A549 (cell line): ENCODE measurements at regions of chr2 and their contacts with region 1.

Region 1: GRCh38 chr2:23404426-23404825 is 19.4 kb downstream of the KLHL29 start:
- DNase-seq: peak; percentile 28 to 80
- ATAC-seq: peak; percentile 85 to 93
- H3K4me3 ChIP-seq: no peak overlapping the region
- H3K27ac ChIP-seq: peak overlapping the region; percentile 54 to 61
- H3K4me1 ChIP-seq: peaks cover 21% of the 10 kb centered on the region
- CTCF ChIP-seq: peak; percentile 27; the same call in 2 of the 3 replicates
- EP300 ChIP-seq: no peak
- POLR2A ChIP-seq: no peak
- RAD21 ChIP-seq: peak; percentile 47 to 51

Region 2: DNA sequence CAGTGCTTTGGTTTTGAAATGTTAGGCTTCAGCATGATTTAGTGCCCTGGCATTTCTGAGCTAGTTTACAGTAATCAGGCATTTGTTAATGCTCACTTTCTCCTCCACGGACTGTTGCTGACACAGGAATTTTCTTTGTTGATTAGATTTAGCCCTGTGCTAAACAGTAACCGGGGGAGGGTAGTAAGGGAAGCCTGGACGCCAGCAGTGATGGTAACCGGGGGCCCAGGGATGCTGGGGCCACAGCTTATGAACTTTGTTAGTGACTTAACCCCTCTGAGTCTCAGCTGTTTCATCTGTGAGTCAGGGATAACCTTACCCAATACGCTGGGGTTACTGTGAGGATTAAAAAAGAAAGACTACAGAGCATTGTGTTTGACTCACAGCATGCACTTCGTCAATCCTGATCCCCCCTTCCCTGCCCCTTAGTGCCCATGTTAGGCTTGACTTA is 14.1 kb after region 1 on chr2:
- CTCF ChIA-PET with region 1: interaction called, 10 read pairs
- POLR2A ChIA-PET with region 1: no interaction called
- DNase-seq: no peak
- ATAC-seq: peak; percentile 9 to 30; a peak in 3 of 6 replicates
- H3K4me3 ChIP-seq: no peak overlapping the region
- H3K27ac ChIP-seq: 0 out of 6 replicates have a peak overlapping the region, but pooled peaks of 1 of the 2 experiments have one; percentile 2
- H3K4me1 ChIP-seq: 0 out of 3 replicates have a peak, but pooled peaks cover 7% of the 10 kb centered on the region
- CTCF ChIP-seq: no peak
- EP300 ChIP-seq: no peak
- POLR2A ChIP-seq: no peak
- RAD21 ChIP-seq: no peak

Region 3: DNA sequence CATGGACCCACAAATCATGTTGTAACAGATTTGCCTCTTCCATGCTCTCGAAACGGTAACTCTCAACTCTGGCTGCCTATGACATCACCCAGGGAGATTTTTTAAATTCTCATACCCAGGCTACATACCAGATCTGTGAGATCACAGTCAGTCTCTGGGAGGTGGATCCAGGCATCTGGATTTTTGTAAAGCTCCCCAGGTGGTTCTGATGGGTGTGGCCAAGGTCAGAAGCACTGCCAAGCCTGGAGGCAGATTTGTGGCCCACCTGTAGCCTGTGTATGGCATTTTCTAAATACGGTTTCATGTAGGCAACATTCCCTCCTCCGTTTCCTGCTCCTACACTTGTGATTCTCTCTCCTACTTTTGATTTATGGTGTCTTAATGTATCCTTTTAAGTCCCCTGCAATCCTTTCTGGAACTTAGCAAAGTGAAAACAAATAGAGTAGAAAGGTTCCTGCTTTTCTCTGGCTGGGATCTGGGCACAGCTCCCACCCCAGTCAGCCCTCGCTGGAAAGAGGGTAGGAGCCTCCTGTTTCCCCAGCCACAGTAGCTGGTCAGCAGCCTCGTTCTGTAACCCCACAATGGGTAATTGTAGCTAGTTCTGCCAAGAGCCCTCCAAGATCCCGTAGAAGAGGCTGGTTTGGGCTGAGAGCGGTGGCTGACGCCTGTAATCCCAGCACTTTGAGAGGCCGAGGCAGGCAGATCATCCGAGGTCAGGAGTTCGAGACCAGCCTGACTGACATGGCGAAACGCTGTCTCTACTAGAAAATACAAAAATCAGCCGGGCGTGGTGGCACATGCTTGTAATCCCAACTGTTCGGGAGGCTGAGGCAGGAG is 76.8 kb after region 1 on chr2:
- CTCF ChIA-PET with region 1: no interaction called
- POLR2A ChIA-PET with region 1: no interaction called
- DNase-seq: peak; percentile 67 to 72
- ATAC-seq: peak; percentile 81 to 82
- H3K4me3 ChIP-seq: no peak overlapping the region
- H3K27ac ChIP-seq: peak overlapping the region; percentile 66 to 72; a peak in 5 of 6 replicates
- H3K4me1 ChIP-seq: peaks cover 24% of the 10 kb centered on the region
- CTCF ChIP-seq: no peak
- EP300 ChIP-seq: no peak
- POLR2A ChIP-seq: no peak
- RAD21 ChIP-seq: no peak